ENCODE measurements at regions of chr7 and their contacts with region 1.

Region 1: GRCh38 chr7:30851651-30852307 is 59.9 kb upstream of the AQP1 start:
- DNase-seq: no peak
- H3K4me3 Mint-ChIP-seq: no peak overlapping the region
- H3K27ac Mint-ChIP-seq: no peak overlapping the region
- H3K4me1 Mint-ChIP-seq: no peaks in the 10 kb centered on the region
- H3K27me3 Mint-ChIP-seq: no peaks in the 10 kb centered on the region

Region 2: DNA sequence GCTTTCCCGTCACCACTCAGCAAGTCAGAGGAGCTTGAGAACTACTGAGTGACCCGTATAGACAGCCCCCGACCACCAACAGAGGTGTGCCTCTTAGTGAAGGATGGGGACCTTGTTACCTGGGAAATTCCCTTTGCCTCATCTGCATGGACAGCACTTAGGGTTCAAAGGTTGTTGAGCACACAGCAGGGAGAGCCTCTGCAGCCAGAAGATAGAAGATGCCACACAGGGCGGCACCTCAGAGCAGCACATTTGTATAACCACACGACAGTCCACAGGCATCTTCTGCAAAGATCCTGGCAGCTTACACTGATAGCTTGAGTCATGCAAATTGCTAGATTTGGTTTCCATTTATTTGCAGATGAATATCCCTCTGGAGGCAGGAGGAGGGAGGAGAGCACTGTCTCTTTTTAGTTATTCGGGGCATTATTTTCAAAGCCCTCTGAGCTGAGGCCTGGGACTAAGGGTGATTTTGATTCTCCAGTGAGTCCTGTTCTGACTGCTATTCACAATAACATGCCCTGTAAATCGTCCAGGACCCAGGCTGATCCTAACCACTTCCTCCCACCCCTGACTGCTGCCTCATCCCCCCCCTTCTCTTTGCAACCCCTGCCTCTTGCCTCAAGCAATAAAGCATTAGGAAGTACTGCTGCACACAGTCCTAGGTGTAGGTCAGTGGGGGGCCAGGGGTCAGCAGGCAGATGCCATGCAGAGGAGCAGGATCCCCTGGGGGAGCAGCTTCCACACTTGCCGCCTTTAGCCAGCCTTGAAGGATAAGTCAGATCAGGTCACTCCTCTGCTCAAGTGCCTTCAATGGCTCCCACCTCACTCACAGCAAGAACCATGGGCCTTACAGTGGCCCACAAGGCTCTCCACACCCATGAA is 124.5 kb before region 1 on chr7:
- intact Hi-C with region 1: no loop called
- DNase-seq: peak; percentile 54
- H3K4me3 Mint-ChIP-seq: peak overlapping the region; percentile 79
- H3K27ac Mint-ChIP-seq: peak overlapping the region; percentile 90
- H3K4me1 Mint-ChIP-seq: peaks cover 49% of the 10 kb centered on the region
- H3K27me3 Mint-ChIP-seq: peaks cover 2% of the 10 kb centered on the region

Region 3: GRCh38 chr7:30870821-30871518 is 19.2 kb after region 1 on chr7:
- intact Hi-C with region 1: loop called (anchors 1 kb)
- DNase-seq: no peak
- H3K4me3 Mint-ChIP-seq: no peak overlapping the region
- H3K27ac Mint-ChIP-seq: no peak overlapping the region
- H3K4me1 Mint-ChIP-seq: no peaks in the 10 kb centered on the region
- H3K27me3 Mint-ChIP-seq: peaks cover 2% of the 10 kb centered on the region

Measured in activated T-helper 1 cell treated with anti-CD3 and anti-CD28 coated beads, Interleukin-12 subunit alpha, Interleukin-12 subunit beta, Interleukin-2, Interleukin-4 antibody, amounts not matched to agents 30 ng/mL and 10 ng/mL and 1 ng/mL, durations not matched to agents 14 hours and 24 hours and 36 hours (primary cell).